KBM-7 (cell line): ENCODE measurements at regions of chr14 and their contacts with region 1.

Region 1: DNA sequence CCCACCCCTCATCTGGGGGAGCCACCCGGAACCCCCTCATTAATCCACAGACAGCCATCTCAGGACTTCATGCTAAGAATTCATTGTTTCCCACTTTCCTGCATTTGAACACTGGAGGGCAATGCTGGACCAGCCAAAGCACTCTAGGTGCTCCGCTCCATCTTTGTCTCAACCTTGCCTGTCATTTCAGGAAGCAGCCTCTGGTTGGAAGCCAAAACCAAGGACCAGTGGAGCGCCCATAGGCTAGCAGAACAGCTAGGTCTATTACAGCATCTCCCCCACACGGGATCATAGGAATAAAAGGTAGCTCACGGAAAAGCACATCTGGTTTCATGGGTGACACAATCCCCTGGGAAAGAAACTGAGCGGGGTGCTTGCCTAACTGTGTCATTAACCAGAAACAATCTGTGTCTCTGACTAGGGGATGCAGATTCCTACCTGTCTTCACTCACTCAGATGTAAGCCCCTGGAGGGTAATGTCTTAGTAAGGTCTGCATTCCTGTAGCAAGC is 197.1 kb downstream of the DAD1 start:
- DNase-seq: peak; percentile 89

Region 2: GRCh38 chr14:22448905-22449599 is 57.1 kb after region 1 on chr14:
- in situ Hi-C with region 1: no loop called
- DNase-seq: no peak

Region 3: DNA sequence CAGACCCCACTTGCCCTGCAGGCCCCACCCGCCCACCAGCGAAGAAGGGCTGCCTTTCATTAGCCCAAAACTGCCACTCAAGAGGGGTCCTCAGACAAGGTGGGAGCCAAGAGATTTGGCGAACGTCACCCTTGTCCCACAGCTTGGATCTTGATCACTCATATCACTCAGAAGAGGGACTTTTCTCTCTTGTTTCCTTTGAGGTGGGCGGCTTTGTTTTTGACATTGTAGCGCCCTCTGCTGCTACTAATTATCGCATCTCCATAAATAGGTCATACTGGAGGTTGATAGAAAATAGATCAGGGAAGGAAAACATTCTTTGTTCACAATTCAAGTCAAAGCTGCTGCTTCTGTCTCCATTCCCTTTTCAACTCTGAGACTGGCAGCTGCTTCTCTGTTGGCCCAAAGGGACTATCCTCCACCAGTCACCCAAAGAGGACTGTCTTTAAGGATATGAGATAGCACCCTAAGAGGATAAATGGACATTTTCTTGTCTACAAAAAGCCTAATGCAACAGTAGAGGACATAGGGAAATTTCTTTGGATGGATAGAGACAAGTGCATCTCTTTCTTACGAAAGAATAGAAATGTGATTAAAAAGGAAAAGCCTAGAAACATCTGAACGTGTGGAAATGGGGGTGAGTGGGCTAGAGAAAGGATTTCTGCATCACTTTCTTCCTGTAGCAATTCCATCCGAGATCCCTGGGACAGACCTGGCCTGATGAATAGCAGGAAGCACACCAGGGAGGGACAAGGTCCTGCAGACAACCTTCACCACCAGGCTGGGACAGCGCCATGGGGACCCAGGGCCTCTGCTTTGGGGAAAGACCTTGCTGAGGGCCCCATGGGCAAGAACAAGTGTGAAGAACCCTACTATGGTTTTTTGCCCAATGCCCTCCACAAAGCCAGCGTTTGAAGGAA is 81.2 kb after region 1 on chr14:
- in situ Hi-C with region 1: loop called (anchors 10 kb)
- DNase-seq: peak; percentile 92